ENCODE measurements at regions of chr12 and their contacts with region 1.

Region 1: GRCh38 chr12:89019408-89020120 is 332.7 kb downstream of the DUSP6 start:
- DNase-seq: peak; percentile 95
- H3K4me3 ChIP-seq: peak overlapping the region in 2 of 3 experiments; percentile 18 to 20
- H3K27ac ChIP-seq: no peak overlapping the region
- H3K4me1 ChIP-seq: peaks cover 8% of the 10 kb centered on the region
- H3K27me3 ChIP-seq: no peaks in the 10 kb centered on the region
- CTCF ChIP-seq: peak; percentile 81 to 83
- POLR2A ChIP-seq: no peak

Region 2: DNA sequence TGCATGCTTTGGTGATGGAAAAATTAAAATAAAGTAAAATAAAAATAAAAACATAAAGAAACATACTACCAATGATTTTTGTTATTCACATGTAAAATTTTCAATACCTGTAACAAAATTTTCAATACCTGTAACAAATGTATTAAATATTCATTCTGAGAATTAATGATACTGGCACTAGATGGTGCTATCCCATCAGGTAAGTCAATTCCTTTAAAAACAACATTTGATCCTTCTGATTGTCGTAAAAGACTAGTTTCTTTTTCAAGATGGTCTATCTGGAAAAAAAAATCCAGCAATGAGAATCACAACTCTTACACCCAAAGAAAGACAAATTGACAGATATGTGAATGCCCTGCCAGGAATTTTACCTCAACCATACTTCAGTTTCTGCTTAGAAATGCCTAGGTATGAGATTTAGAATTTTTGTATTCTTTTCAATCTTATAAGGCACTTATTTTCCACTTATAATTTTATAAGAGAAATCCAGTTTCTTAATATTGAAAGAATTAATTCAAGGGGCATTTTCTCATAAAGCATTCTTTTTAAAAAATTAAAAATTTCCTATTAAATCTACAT is 908.4 kb before region 1 on chr12:
- CTCF ChIA-PET with region 1: interaction called, 7 read pairs
- POLR2A ChIA-PET with region 1: no interaction called
- dilution Hi-C with region 1: no loop called
- intact Hi-C with region 1: loop called (anchors 1 kb)
- DNase-seq: peak; percentile 67
- H3K4me3 ChIP-seq: peak overlapping the region in 1 of 3 experiments; percentile 61
- H3K27ac ChIP-seq: peak overlapping the region; percentile 20
- H3K4me1 ChIP-seq: peaks cover 5% of the 10 kb centered on the region
- H3K27me3 ChIP-seq: no peaks in the 10 kb centered on the region
- CTCF ChIP-seq: peak in 1 of 2 donors; percentile 2
- POLR2A ChIP-seq: no peak

Region 3: DNA sequence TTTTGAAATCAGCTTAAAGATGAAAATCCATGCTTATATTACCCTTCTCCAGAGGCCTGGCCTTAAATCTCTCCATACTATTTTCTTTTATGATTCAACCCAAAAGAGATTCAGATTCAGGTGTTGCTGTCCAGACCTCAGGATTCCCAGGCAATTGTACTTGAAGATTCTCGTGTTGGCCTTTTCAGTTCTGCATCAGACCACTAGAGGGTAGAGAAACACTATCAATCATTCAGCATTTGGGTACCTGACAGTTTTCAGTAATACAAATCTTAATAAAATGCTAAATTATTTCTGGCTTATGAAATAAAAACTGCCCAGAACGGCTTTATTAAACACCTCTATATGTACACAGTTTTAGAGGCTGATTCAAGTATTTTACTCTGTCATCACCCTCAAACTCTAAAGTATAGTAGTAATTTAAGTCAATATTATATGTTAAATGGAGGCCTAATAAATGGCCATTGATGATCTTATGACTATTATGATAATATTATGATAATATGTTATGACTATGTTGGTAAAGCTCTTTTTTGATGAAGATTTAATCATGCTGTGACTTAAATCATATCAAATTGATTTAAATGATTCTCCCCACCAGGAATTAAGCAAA is 31.6 kb after region 1 on chr12:
- CTCF ChIA-PET with region 1: interaction called, 9 read pairs
- POLR2A ChIA-PET with region 1: no interaction called
- dilution Hi-C with region 1: no loop called
- intact Hi-C with region 1: loop called (anchors 1 kb)
- DNase-seq: peak; percentile 88
- H3K4me3 ChIP-seq: no peak overlapping the region
- H3K27ac ChIP-seq: no peak overlapping the region
- H3K4me1 ChIP-seq: no peaks in the 10 kb centered on the region
- H3K27me3 ChIP-seq: no peaks in the 10 kb centered on the region
- CTCF ChIP-seq: peak; percentile 62
- POLR2A ChIP-seq: no peak

Region 4: GRCh38 chr12:89352492-89353187 is 333.1 kb after region 1 on chr12 and contains the start of gene DUSP6:
- CTCF ChIA-PET with region 1: interaction called, 29 read pairs
- POLR2A ChIA-PET with region 1: interaction called, 9 read pairs
- dilution Hi-C with region 1: no loop called
- intact Hi-C with region 1: no loop called
- DNase-seq: peak; percentile 100
- H3K4me3 ChIP-seq: peak within 1 kb of the TSS; percentile 72 to 97 (median 90)
- H3K27ac ChIP-seq: peak within 1 kb of the TSS; percentile 88
- H3K4me1 ChIP-seq: peaks cover 37% of the 10 kb centered on the region
- H3K27me3 ChIP-seq: no peaks in the 10 kb centered on the region
- CTCF ChIP-seq: no peak
- POLR2A ChIP-seq: no peak
- total RNA-seq, gene DUSP6: 148 and 200 TPM in 2 replicates

Region 5: GRCh38 chr12:89524541-89525285 is 505.1 kb after region 1 on chr12 and contains the start of gene GALNT4:
- CTCF ChIA-PET with region 1: interaction called, 171 read pairs
- POLR2A ChIA-PET with region 1: interaction called, 5 read pairs
- dilution Hi-C with region 1: no loop called
- intact Hi-C with region 1: loop called (anchors 1 kb)
- DNase-seq: peak; percentile 92
- H3K4me3 ChIP-seq: peak within 1 kb of the TSS; percentile 16 to 92 (median 59)
- H3K27ac ChIP-seq: peak within 1 kb of the TSS; percentile 35
- H3K4me1 ChIP-seq: peaks cover 32% of the 10 kb centered on the region
- H3K27me3 ChIP-seq: no peaks in the 10 kb centered on the region
- CTCF ChIP-seq: peak; percentile 40 to 82
- POLR2A ChIP-seq: peak; percentile 25
- total RNA-seq, gene GALNT4: 9.8 and 10.9 TPM in 2 replicates